Common myeloid progenitor, CD34-positive (primary cell): ENCODE measurements at regions of chr1 and their contacts with region 1.

Region 1: DNA sequence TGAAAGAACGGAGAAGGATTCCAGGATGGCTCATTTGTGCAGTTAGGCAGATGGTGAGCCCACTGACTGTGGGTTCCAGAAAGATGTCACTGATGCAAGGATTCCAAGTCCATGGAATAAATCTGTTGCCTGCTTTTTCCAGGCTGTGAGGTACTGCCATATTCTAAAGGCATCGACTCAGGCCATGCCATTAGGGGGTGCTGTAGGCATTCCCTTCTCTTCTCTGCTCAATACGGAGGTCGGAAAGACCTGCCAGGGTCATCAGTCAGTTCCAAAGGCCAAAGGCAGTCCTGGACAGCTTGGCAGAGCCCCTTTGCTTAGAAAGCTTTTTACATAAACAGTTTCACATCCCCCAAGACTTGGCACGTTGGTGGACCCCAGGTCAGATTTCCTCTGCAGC is 31.7 kb upstream of the TMEM125 start:
- DNase-seq: peak; percentile 58 to 73 (median 62)
- H3K4me3 ChIP-seq: no peak overlapping the region
- H3K27ac ChIP-seq: no peak overlapping the region
- H3K4me1 ChIP-seq: peaks cover 6 to 20% (median 14%) of the 10 kb centered on the region in 4 experiments
- H3K27me3 ChIP-seq: no peaks in the 10 kb centered on the region

Region 2: DNA sequence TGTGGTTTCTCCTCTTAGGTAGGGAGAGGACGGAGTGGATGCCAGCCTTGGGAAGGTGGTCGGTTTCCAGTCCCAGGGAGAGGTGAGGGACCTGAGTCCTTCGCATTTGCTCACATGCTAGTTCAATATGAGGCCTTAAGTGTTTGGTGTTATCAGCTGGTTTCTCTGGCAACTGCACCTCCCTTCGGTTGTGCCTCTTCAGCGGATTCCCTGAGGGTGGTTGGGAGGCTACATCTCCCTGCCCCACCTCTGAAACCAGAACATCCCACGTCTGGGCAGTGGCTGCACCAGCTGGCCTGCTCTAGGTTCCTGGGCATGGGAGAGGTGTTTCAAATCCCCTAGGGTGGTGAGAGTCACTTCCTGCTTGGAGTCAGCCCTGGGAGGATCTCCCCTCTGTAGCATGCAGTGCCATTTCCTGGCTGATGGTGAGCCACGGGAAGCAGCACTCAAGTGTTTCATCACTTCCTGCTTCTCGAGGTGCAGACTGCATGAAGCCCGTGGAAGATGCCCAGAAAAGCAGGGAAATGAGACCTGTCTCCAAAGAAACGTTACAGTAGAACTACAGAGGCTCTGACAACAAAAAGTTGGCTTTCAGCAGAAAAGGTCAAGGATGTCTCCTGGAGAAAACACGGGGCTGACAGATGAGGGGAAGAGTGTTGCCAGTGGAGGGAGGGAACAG is 36.2 kb after region 1 on chr1:
- CTCF ChIA-PET with region 1: no interaction called
- POLR2A ChIA-PET with region 1: no interaction called
- DNase-seq: peak; percentile 63 to 88 (median 80)
- H3K4me3 ChIP-seq: peak overlapping the region in 1 of 7 experiments; percentile 2
- H3K27ac ChIP-seq: no peak overlapping the region
- H3K4me1 ChIP-seq: peaks cover 0 to 28% (median 15%) of the 10 kb centered on the region in 4 experiments
- H3K27me3 ChIP-seq: peaks cover 0 to 2% (median 0%) of the 10 kb centered on the region in 5 experiments

Region 3: DNA sequence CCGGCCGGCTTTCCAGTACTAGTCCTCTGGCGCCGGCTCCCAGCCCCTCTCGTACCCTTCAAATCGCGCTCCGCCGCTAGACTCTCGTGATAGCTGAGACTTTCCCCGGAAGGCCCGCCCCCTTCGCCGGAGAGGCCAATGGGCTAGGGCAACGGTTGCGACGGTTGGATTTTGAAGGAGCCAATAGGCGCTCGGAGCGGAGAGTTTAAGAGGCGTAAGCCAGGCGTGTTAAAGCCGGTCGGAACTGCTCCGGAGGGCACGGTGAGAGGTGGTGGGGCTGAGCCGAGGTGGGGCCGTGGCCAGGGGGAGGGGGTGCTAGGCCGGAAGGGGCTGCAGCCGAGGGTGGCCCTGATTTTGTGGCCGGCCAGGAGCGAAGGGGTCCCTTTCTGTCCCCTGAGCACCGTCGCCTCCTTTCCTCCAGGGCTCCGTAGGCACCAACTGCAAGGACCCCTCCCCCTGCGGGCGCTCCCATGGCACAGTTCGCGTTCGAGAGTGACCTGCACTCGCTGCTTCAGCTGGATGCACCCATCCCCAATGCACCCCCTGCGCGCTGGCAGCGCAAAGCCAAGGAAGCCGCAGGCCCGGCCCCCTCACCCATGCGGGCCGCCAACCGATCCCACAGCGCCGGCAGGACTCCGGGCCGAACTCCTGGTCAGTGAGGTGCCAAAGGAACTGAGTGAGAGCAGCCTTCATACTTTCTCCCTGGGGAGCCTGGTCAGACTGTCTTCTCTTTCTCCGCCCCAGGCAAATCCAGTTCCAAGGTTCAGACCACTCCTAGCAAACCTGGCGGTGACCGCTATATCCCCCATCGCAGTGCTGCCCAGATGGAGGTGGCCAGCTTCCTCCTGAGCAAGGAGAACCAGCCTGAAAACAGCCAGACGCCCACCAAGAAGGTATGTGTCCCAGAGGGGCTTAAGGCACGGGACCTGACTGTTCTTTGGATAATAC is 120.9 kb after region 1 on chr1 and contains the start of gene CDC20:
- CTCF ChIA-PET with region 1: interaction called, 12 read pairs
- POLR2A ChIA-PET with region 1: no interaction called
- DNase-seq: peak; percentile 95 to 97 (median 97)
- H3K4me3 ChIP-seq: peak within 1 kb of the TSS; percentile 77 to 97 (median 93)
- H3K27ac ChIP-seq: peak within 1 kb of the TSS; percentile 77 to 91
- H3K4me1 ChIP-seq: peaks cover 2 to 33% (median 24%) of the 10 kb centered on the region in 4 experiments
- H3K27me3 ChIP-seq: no peaks in the 10 kb centered on the region

Region 4: DNA sequence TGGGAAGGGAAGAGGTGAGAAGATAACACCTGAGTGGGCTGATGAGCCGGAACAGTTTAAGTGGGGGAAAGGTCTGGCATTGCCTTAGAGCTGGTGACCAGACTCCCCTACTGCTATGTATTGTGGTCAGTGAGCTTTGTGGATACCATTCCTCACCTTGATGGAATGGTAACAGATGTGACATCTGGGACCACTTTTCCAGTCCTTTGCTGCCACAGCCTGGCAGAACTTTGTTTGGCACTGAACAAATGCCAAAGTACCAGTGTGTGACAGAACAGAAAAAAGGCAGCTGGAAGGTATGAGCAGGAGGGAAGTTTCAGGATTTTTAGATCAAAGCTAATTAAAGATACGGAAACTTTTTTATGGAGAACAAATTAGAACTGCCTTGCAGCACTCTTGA is 145.4 kb after region 1 on chr1:
- CTCF ChIA-PET with region 1: interaction called, 10 read pairs
- POLR2A ChIA-PET with region 1: no interaction called
- DNase-seq: peak in 1 of 3 donors; percentile 28
- H3K4me3 ChIP-seq: no peak overlapping the region
- H3K27ac ChIP-seq: no peak overlapping the region
- H3K4me1 ChIP-seq: peaks cover 2 to 20% (median 10%) of the 10 kb centered on the region in 4 experiments
- H3K27me3 ChIP-seq: no peaks in the 10 kb centered on the region

Region 5: GRCh38 chr1:43414634-43415223 is 176.6 kb after region 1 on chr1:
- CTCF ChIA-PET with region 1: interaction called, 32 read pairs
- POLR2A ChIA-PET with region 1: no interaction called
- DNase-seq: peak; percentile 82 to 91 (median 87)
- H3K4me3 ChIP-seq: no peak overlapping the region
- H3K27ac ChIP-seq: no peak overlapping the region
- H3K4me1 ChIP-seq: no peaks in the 10 kb centered on the region
- H3K27me3 ChIP-seq: no peaks in the 10 kb centered on the region